Left ventricle myocardium inferior (tissue), 1 donor: ENCODE measurements at regions of chr18 and their contacts with region 1.

Region 1: GRCh38 chr18:24778810-24779418 is 318.5 kb downstream of the HRH4 start:
- DNase-seq: no peak
- H3K4me3 ChIP-seq: no peak overlapping the region
- H3K27ac ChIP-seq: no peak overlapping the region
- H3K4me1 ChIP-seq: no peaks in the 10 kb centered on the region
- H3K27me3 ChIP-seq: no peaks in the 10 kb centered on the region
- CTCF ChIP-seq: no peak

Region 2: DNA sequence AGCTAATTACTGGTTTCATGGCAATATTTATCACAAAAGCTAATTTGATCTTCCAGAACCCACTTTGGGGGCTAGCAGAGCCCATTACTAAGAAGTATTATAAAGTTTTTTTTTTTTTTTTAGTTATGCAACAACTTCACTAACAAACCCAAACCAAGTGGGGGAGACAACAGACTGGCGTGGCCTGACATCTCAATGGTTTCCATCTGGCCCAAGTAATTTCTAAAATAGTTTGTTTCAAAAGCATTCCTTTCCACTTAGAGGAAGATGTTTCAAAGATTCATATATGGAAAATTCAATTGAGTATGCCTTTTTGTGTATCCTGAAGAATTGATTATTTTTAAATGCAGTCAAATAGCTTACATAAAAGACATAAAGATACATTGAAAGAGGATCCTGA is 48.6 kb after region 1 on chr18:
- intact Hi-C with region 1: loop called (anchors 10 kb)
- DNase-seq: no peak
- H3K4me3 ChIP-seq: no peak overlapping the region
- H3K27ac ChIP-seq: no peak overlapping the region
- H3K4me1 ChIP-seq: no peaks in the 10 kb centered on the region
- H3K27me3 ChIP-seq: peaks cover 14% of the 10 kb centered on the region
- CTCF ChIP-seq: no peak

Region 3: GRCh38 chr18:24982831-24983230 is 203.9 kb after region 1 on chr18:
- intact Hi-C with region 1: no loop called
- DNase-seq: no peak
- H3K4me3 ChIP-seq: no peak overlapping the region
- H3K27ac ChIP-seq: no peak overlapping the region
- H3K4me1 ChIP-seq: peaks cover 18% of the 10 kb centered on the region
- H3K27me3 ChIP-seq: peaks cover 8% of the 10 kb centered on the region
- CTCF ChIP-seq: no peak